SK-N-SH (cell line): ENCODE measurements at regions of chr22 and their contacts with region 1.

Region 1: DNA sequence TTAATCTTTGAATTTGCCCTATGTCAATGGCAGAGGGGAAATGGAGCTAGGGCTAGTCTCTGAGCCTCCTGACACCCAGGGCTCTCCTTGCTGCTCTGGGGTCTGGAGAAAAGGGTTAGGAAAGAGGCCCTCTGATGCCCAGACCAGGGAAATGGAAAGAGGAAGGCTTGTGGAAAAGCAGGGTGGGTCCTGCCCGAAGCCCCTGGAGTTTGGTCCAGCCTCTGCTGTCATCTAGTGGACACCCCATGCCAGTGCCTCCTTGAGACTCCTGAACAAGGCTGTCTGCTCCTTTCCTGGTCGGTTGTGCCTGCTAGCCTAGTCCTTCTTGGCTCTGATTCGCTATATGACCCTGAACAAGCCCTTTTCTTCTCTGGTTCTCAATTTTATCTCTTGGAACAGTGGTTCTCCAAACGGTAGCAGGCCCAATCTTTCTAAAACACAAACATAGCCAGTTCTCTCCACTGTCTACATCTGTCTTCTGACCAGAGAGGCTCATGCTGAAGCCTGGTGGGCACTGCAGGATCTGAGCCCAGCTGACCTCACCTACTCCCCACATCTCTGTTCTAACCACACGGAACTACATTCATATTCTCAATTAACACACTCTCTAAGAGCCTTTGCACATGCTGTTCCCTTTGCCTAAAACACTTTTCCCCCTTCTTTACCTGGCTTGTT is 8.8 kb upstream of the PLA2G3 start:
- DNase-seq: peak; percentile 88
- H3K4me3 ChIP-seq: no peak overlapping the region; a peak in 1 of 4 replicates
- H3K27ac ChIP-seq: no peak overlapping the region
- H3K4me1 ChIP-seq: no peaks in the 10 kb centered on the region
- H3K27me3 ChIP-seq: no peaks in the 10 kb centered on the region
- CTCF ChIP-seq: peak; percentile 89
- EP300 ChIP-seq: no peak
- RAD21 ChIP-seq: peak; percentile 99

Region 2: DNA sequence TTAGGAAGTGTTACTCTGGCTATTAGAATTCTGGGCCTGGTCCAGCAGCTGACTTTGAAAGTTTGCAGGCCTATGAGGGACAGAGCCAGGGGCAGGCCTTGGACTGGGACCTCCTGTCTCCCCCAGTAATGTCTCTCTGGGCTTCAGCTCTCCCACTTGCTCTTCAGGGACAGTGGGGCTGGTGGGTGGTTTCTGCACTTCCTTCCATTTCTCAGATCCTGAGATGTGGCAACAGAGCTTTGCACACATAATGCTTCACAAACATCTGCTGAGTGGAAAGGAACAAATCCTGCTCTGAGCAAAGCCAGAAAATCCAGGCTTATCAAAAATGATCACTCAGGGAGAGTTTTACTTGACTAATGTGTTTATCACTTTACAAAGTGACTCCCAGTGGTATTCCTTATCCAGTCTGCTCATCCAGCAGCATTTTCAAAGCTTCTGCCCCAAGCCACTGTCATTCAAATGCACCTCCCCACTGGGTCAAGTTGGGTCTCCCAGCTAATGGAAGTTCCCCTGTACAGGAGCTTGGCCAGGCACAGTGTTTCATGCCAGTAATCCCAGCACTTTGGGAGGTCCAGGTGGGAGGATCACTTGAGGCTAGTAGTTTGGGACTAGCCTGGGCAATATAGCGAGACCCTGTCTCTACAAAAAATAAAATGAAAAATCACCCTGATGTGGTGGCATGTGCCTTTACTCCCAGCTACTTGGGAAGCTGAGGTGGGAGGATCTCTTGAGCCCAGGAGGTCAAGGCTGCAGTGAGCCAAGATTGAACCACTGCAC is 467.9 kb before region 1 on chr22:
- CTCF ChIA-PET with region 1: no interaction called
- POLR2A ChIA-PET with region 1: no interaction called
- DNase-seq: peak; percentile 34
- H3K4me3 ChIP-seq: no peak overlapping the region
- H3K27ac ChIP-seq: peak overlapping the region in 1 of 2 experiments; percentile 67; a peak in 2 of 4 replicates
- H3K4me1 ChIP-seq: peaks cover 0 to 28% of the 10 kb centered on the region in 2 experiments; a peak in 1 of 4 replicates
- H3K27me3 ChIP-seq: no peaks in the 10 kb centered on the region
- CTCF ChIP-seq: no peak
- EP300 ChIP-seq: 0 out of 4 replicates have a peak, but pooled peaks of 1 of the 2 experiments have one; percentile 6
- RAD21 ChIP-seq: no peak

Region 3: GRCh38 chr22:30947816-30948454 is 201.2 kb before region 1 on chr22:
- CTCF ChIA-PET with region 1: interaction called, 18 read pairs
- POLR2A ChIA-PET with region 1: no interaction called
- DNase-seq: peak; percentile 38
- H3K4me3 ChIP-seq: no peak overlapping the region
- H3K27ac ChIP-seq: no peak overlapping the region; a peak in 1 of 4 replicates
- H3K4me1 ChIP-seq: peaks cover 0 to 12% of the 10 kb centered on the region in 2 experiments; a peak in 1 of 4 replicates
- H3K27me3 ChIP-seq: no peaks in the 10 kb centered on the region
- CTCF ChIP-seq: peak; percentile 67
- EP300 ChIP-seq: no peak
- RAD21 ChIP-seq: peak; percentile 73

Region 4: DNA sequence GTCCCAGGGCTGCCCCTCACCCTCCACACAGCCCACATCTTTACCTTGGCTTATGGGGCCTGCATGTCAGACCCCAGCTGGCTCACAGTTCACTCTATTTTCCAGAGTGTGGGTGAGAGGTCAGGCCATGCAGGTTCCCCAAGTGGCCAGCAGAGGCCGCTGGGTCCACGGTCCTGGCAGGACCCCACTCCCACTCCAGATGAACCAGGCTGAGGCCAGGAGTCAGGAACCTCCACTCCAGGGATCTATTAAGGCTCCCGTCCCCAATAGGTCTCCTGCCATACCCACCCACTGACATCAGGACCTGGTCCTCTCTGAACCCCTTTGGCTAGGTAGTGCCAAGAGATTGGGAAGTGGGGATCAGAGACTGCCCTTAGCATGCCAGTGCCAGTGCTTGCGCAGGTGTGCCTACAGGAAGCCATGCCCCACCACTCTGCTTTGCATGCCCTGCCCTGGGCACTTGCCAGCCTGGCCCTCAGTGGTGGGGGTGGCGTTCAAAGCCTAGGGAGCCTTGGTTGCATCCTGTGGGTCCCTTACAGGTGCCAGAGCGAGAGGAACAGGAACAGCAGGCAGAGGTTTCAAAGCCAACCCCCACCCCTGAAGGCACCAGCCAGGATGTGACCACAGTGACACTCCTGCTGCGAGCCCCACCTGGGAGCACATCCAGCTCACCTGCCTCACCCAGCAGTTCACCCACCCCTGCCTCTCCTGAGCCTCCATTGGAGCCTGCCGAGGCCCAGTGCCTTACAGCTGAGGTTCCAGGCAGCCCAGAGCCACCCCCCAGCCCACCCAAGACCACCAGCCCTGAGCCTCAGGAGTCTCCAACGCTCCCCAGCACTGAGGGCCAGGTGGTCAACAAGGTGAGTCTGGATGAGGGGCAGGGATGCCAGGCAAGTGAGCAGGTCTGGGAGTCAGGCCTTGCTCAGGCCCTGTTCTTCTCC is 59.7 kb before region 1 on chr22:
- CTCF ChIA-PET with region 1: interaction called, 53 read pairs
- POLR2A ChIA-PET with region 1: interaction called, 3 read pairs
- DNase-seq: peak; percentile 90
- H3K4me3 ChIP-seq: no peak overlapping the region; a peak in 1 of 4 replicates
- H3K27ac ChIP-seq: no peak overlapping the region
- H3K4me1 ChIP-seq: peaks cover 0 to 6% of the 10 kb centered on the region in 2 experiments; a peak in 2 of 4 replicates
- H3K27me3 ChIP-seq: no peaks in the 10 kb centered on the region
- CTCF ChIP-seq: peak; percentile 89
- EP300 ChIP-seq: no peak
- RAD21 ChIP-seq: peak; percentile 81

Region 5: GRCh38 chr22:31098632-31099110 is 50.4 kb before region 1 on chr22:
- CTCF ChIA-PET with region 1: interaction called, 15 read pairs
- POLR2A ChIA-PET with region 1: no interaction called
- DNase-seq: peak; percentile 58
- H3K4me3 ChIP-seq: no peak overlapping the region
- H3K27ac ChIP-seq: no peak overlapping the region
- H3K4me1 ChIP-seq: no peaks in the 10 kb centered on the region; a peak in 1 of 4 replicates
- H3K27me3 ChIP-seq: no peaks in the 10 kb centered on the region
- CTCF ChIP-seq: no peak
- EP300 ChIP-seq: no peak
- RAD21 ChIP-seq: no peak

Region 6: GRCh38 chr22:31160328-31160978 is 11.4 kb after region 1 on chr22:
- CTCF ChIA-PET with region 1: interaction called, 44 read pairs
- POLR2A ChIA-PET with region 1: no interaction called
- DNase-seq: no peak
- H3K4me3 ChIP-seq: peak overlapping the region; percentile 76 to 99
- H3K27ac ChIP-seq: peak overlapping the region; percentile 8 to 69; a peak in 3 of 4 replicates
- H3K4me1 ChIP-seq: peaks cover 6 to 15% of the 10 kb centered on the region in 2 experiments
- H3K27me3 ChIP-seq: no peaks in the 10 kb centered on the region
- CTCF ChIP-seq: no peak
- EP300 ChIP-seq: no peak
- RAD21 ChIP-seq: no peak

Region 7: GRCh38 chr22:31179356-31179755 is 30.3 kb after region 1 on chr22:
- CTCF ChIA-PET with region 1: no interaction called
- POLR2A ChIA-PET with region 1: no interaction called
- DNase-seq: no peak
- H3K4me3 ChIP-seq: no peak overlapping the region
- H3K27ac ChIP-seq: no peak overlapping the region
- H3K4me1 ChIP-seq: peaks cover 0 to 17% of the 10 kb centered on the region in 2 experiments; a peak in 1 of 4 replicates
- H3K27me3 ChIP-seq: no peaks in the 10 kb centered on the region
- CTCF ChIP-seq: no peak
- EP300 ChIP-seq: no peak
- RAD21 ChIP-seq: no peak